CD4-positive, alpha-beta memory T cell (primary cell): ENCODE measurements at regions of chr10 and their contacts with region 1.

Region 1: GRCh38 chr10:56286096-56286495 is 75.0 kb downstream of the ZWINT start:
- DNase-seq: no peak
- H3K4me3 ChIP-seq: no peak overlapping the region
- H3K4me3 Mint-ChIP-seq: no peak overlapping the region
- H3K27ac ChIP-seq: no peak overlapping the region
- H3K27ac Mint-ChIP-seq: no peak overlapping the region
- H3K4me1 ChIP-seq: no peaks in the 10 kb centered on the region
- H3K4me1 Mint-ChIP-seq: no peaks in the 10 kb centered on the region
- H3K27me3 ChIP-seq: no peaks in the 10 kb centered on the region
- H3K27me3 Mint-ChIP-seq: no peaks in the 10 kb centered on the region

Region 2: DNA sequence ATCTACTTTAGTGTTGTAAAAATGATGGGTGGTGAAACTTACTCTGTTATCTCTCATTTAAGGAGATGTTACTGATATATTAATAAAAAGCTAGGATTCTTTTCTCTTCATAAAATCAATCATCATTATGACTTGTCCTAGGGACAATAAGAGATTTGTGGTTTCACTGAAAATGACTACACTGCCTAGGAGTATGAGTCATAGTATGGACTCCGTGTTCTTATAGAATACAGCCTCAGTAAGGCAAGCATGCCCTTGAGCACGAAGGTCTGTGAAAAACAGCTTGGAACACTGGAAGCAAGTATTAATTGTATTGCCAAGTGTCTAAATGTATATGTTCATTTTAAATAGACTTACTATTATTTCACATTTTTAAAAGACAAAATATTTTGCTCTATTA is 735.9 kb before region 1 on chr10:
- CTCF ChIA-PET with region 1: no interaction called
- POLR2A ChIA-PET with region 1: no interaction called
- intact Hi-C with region 1: loop called (anchors 10 kb)
- DNase-seq: no peak
- H3K4me3 ChIP-seq: no peak overlapping the region
- H3K4me3 Mint-ChIP-seq: no peak overlapping the region
- H3K27ac ChIP-seq: no peak overlapping the region
- H3K27ac Mint-ChIP-seq: no peak overlapping the region
- H3K4me1 ChIP-seq: no peaks in the 10 kb centered on the region
- H3K4me1 Mint-ChIP-seq: no peaks in the 10 kb centered on the region
- H3K27me3 ChIP-seq: no peaks in the 10 kb centered on the region
- H3K27me3 Mint-ChIP-seq: no peaks in the 10 kb centered on the region

Region 3: DNA sequence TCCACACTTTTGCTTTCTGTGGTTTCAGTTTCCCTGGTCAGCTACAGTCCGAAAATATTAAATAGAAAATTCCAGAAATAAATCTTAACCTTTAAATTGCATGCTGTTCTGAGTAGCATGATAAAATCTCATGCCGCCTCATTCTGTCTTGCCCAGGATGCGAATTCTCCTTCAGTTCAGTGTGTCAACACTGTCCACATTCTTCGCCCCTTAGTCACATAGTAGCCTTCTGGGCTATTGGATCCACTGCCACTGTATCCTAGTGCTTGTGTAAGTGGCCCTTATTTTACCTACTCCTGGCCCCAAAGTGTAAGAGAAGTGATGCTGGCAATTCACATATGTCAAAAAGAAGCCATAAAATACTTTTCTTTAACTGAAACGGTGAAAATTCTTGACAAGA is 54.7 kb before region 1 on chr10:
- CTCF ChIA-PET with region 1: no interaction called
- POLR2A ChIA-PET with region 1: no interaction called
- intact Hi-C with region 1: no loop called
- DNase-seq: no peak
- H3K4me3 ChIP-seq: no peak overlapping the region
- H3K4me3 Mint-ChIP-seq: no peak overlapping the region
- H3K27ac ChIP-seq: no peak overlapping the region
- H3K27ac Mint-ChIP-seq: no peak overlapping the region
- H3K4me1 ChIP-seq: no peaks in the 10 kb centered on the region
- H3K4me1 Mint-ChIP-seq: no peaks in the 10 kb centered on the region
- H3K27me3 ChIP-seq: no peaks in the 10 kb centered on the region
- H3K27me3 Mint-ChIP-seq: peaks cover 0 to 2% of the 10 kb centered on the region in 2 donors

Region 4: GRCh38 chr10:56269181-56269580 is 16.9 kb before region 1 on chr10:
- CTCF ChIA-PET with region 1: no interaction called
- POLR2A ChIA-PET with region 1: no interaction called
- intact Hi-C with region 1: no loop called
- DNase-seq: no peak
- H3K4me3 ChIP-seq: no peak overlapping the region
- H3K4me3 Mint-ChIP-seq: no peak overlapping the region
- H3K27ac ChIP-seq: no peak overlapping the region
- H3K27ac Mint-ChIP-seq: no peak overlapping the region
- H3K4me1 ChIP-seq: no peaks in the 10 kb centered on the region
- H3K4me1 Mint-ChIP-seq: no peaks in the 10 kb centered on the region
- H3K27me3 ChIP-seq: no peaks in the 10 kb centered on the region
- H3K27me3 Mint-ChIP-seq: no peaks in the 10 kb centered on the region

Region 5: DNA sequence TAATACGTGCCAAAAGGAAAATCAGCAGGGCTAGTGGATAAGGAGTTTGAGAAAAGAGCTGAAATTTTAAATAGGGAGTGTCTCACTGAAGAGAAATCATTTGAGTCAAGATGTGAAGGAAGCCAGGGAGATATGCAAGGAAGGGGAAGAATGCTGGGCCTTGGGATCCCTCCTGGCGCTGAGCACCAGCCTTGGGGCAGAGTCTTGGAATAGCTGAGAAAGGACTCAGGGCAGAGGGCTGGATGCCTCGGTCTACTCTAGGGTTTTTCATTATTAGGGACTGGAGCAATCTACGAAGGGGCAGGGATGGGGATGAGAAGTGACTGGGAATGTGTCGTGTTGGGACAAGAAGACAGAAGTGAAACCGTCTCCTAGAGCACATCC is 74.5 kb after region 1 on chr10:
- CTCF ChIA-PET with region 1: no interaction called
- POLR2A ChIA-PET with region 1: no interaction called
- intact Hi-C with region 1: no loop called
- DNase-seq: no peak
- H3K4me3 ChIP-seq: peak overlapping the region; percentile 89 to 96
- H3K4me3 Mint-ChIP-seq: peak overlapping the region; percentile 89 to 97 (median 94)
- H3K27ac ChIP-seq: peak overlapping the region; percentile 54
- H3K27ac Mint-ChIP-seq: peak overlapping the region; percentile 76 to 95 (median 85)
- H3K4me1 ChIP-seq: peaks cover 14% of the 10 kb centered on the region
- H3K4me1 Mint-ChIP-seq: peaks cover 17 to 31% (median 20%) of the 10 kb centered on the region in 4 donors
- H3K27me3 ChIP-seq: no peaks in the 10 kb centered on the region
- H3K27me3 Mint-ChIP-seq: no peaks in the 10 kb centered on the region